Left cardiac atrium (tissue), 4 donors: ENCODE measurements at regions of chr3 and their contacts with region 1.

Region 1: DNA sequence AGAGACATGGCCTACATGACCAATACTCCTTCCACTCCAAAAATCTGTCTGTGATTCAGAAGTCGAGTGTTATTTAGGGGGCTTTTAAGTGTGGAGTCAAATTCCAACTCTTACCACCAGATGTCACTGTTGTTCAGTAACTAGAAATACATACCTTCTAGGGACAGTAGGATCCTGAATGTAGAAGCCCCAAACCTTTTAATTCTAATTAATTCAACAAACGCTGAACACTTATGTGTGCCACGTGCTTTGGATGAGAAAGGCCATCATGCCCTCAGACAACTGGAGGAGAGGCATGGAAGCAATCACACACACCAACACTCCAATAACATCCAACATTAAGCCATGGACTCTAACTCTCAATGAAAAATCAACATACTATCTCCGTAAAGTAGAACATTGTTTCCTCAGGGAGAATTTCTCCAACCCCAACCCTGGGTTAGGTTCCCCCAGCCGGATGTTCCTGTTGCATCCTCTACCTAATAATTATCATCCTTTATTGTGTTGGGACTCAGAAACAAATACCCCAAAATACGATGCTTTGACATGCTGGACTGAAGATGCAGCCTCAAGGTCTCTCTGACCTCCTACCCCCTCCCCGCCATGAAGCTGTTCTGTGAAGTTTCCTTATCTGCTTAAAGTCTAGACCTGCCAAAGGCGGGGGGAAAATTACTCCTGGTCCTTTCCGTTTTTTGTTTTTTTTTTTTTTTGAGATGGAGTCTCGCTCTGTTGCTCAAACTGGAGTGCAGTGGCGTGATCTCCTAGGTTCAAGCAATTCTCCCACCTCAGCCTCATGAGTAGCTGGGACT is 8.0 kb upstream of the CCDC13 start:
- DNase-seq: no peak
- ATAC-seq: peak; percentile 71 to 76

Region 2: DNA sequence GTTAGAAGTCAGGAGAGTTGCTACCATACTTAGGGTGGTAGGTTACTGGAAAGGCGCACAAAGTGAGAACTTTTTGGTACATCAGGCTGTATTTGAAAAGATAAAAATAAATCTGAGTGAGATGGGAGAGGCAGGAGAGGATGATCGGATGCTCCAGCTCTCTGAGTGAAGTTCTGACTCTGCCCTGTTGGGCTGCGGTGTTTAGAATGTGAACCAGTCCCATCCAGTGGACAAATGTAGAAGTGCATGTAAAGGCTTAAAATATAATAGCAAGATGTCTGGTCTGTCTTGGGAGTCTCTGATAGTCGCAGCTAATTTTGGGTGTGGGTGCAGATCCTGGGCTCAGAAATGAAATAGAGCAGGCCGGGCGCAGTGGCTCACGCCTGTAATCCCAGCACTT is 58.5 kb after region 1 on chr3:
- intact Hi-C with region 1: loop called in 1 of 2 experiments (anchors 2 kb)
- DNase-seq: no peak
- ATAC-seq: peak; percentile 85 to 87

Region 3: DNA sequence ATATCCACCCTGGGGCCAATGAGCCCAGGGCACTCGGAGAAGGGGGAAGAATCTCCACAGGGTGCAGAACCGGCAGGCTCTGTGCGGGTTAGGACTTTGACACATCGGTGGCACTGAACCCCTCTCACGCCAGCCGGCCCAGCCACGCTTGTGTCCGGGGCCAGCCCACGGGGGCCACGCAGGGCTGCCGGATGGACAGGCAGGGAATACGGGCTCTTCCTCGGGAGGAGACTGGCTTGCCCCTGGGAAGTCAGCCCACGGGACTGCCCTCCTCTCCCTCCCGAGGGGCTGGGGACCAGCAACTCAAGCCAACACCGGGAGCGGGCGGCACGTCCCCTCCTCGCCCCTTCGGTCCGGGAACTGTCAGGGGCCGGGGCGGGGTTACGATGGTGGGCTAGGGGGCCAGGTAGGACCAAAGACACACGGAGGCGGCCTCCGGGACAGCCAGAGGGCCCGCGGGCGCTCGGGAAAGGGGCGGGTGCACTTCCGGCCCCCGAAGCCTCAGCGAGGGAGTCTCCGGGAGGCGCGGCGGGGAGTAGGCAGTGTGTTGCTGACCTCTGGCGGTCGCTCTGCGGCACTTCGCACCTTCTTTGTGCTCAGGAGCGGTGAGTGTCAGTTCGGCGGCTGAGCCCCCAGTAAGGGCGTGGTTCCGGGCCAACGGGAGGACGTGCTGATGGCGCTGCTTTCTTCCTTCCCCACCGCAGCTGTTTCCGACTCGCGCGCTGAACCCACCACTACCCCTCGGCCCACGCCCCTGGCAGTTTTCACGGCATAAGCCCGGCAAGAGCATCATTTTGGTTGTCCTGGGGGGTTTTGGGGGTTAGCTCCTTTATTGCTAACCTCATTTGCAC is 99.7 kb after region 1 on chr3:
- intact Hi-C with region 1: loop called (anchors 2 kb)
- DNase-seq: peak; percentile 90
- ATAC-seq: peak; percentile 99